Dendritic cell treated with granulocyte-macrophage colony-stimulating factor and Interleukin-4, amounts not matched to agents 40 ng/mL and 50 ng/mL, for 4 days (primary cell): ENCODE measurements at regions of chr19 and their contacts with region 1.

Region 1: GRCh38 chr19:16628183-16628983 is at the start of gene MED26:
- H3K4me3 Mint-ChIP-seq: peak within 1 kb of the TSS; percentile 99
- H3K27ac Mint-ChIP-seq: peak within 1 kb of the TSS; percentile 97
- H3K4me1 Mint-ChIP-seq: peaks cover 44% of the 10 kb centered on the region
- H3K27me3 Mint-ChIP-seq: no peaks in the 10 kb centered on the region

Region 2: GRCh38 chr19:16572332-16573211 is 55.8 kb before region 1 on chr19 and contains the start of gene SLC35E1:
- intact Hi-C with region 1: loop called (anchors 5 kb)
- H3K4me3 Mint-ChIP-seq: peak within 1 kb of the TSS; percentile 94
- H3K27ac Mint-ChIP-seq: peak within 1 kb of the TSS; percentile 93
- H3K4me1 Mint-ChIP-seq: peaks cover 52% of the 10 kb centered on the region
- H3K27me3 Mint-ChIP-seq: no peaks in the 10 kb centered on the region

Region 3: DNA sequence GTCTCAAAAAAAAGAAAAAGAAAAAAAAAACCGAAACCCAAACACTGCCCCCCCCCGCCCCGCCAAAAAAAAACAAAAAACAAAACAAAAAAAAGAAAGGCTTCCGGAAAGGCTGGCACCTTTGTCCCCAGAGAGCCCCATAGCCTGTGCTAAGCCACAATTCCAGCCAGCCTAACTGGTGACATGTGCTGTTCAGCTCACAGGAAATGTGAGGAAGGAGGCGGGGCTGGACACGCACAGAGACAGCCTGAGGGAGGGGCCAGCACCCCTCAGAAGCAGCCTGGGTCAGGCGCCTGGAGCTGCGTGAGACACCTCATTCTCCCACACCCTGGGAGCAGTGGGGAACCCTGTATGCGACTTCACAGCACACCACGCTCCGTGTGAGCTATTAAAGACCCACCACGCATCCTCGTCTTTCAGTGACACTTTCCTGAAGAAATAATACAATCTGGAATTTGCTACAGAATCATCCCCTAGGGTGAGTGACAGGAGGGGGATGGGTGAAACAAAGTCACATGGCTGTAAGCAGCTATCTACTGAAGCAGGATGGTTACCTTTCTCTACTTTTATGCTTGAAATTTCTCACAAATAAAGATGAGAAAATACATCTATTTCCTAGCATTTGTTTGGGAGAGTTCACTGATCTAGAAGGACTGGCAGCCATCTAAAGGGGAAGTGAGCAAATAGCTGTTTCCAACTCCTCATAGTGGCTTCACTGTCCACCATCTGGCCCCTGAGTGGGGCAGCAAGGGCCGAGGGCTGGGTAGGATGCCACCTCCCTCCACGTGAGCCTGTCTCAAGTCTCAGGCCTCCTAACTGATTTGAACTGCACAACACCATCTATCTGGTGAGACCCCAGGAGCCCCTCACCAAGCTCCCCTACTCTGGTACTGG is 43.9 kb before region 1 on chr19:
- intact Hi-C with region 1: loop called (anchors 2 kb)
- H3K4me3 Mint-ChIP-seq: peak overlapping the region; percentile 87
- H3K27ac Mint-ChIP-seq: peak overlapping the region; percentile 98
- H3K4me1 Mint-ChIP-seq: peaks cover 90% of the 10 kb centered on the region
- H3K27me3 Mint-ChIP-seq: no peaks in the 10 kb centered on the region

Region 4: GRCh38 chr19:16659831-16660708 is 31.7 kb after region 1 on chr19 and contains the start of gene SMIM7:
- intact Hi-C with region 1: loop called (anchors 2 kb)
- H3K4me3 Mint-ChIP-seq: peak within 1 kb of the TSS; percentile 98
- H3K27ac Mint-ChIP-seq: peak within 1 kb of the TSS; percentile 96
- H3K4me1 Mint-ChIP-seq: peaks cover 42% of the 10 kb centered on the region
- H3K27me3 Mint-ChIP-seq: peaks cover 10% of the 10 kb centered on the region